ENCODE measurements at regions of chr5 and their contacts with region 1.

Region 1: GRCh38 chr5:134851307-134851923 is 5.6 kb downstream of the C5orf24 start:
- DNase-seq: no peak
- ATAC-seq: no peak
- H3K4me3 Mint-ChIP-seq: no peak overlapping the region
- H3K27ac Mint-ChIP-seq: peak overlapping the region; percentile 9
- H3K4me1 Mint-ChIP-seq: peaks cover 56% of the 10 kb centered on the region
- H3K27me3 Mint-ChIP-seq: no peaks in the 10 kb centered on the region

Region 2: DNA sequence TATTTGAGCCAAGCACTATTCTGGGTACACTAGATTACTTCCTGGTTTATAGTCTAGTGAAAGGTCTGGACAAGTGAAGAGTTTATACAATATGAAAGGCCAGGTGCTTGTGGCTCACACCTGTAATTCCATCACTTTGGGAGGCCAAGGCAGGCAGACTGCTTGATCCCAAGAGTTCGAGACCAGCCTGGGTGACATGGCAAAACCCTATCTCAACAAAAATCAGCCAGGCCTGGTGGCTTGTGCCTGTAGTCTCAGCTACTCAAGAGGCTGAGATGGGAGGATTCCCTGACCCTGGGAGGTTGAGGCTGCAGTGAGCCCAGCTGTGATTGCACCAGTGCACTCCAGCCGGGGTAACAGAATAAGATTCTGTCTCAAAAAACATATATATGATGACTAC is 13.3 kb after region 1 on chr5:
- CTCF ChIA-PET with region 1: interaction called, 11 read pairs
- POLR2A ChIA-PET with region 1: no interaction called
- DNase-seq: no peak
- ATAC-seq: no peak
- H3K4me3 Mint-ChIP-seq: no peak overlapping the region
- H3K27ac Mint-ChIP-seq: no peak overlapping the region
- H3K4me1 Mint-ChIP-seq: no peaks in the 10 kb centered on the region
- H3K27me3 Mint-ChIP-seq: no peaks in the 10 kb centered on the region

Measured in activated CD8-positive, alpha-beta T cell treated with anti-CD3 and anti-CD28 coated beads, Interleukin-2, amount 10 ng/mL, durations not matched to agents 7 days and 5 days (primary cell).